Posterior vena cava (tissue), 2 donors: ENCODE measurements at regions of chr1 and their contacts with region 1.

Region 1: GRCh38 chr1:48202030-48202752 is 20.3 kb upstream of the SLC5A9 start:
- DNase-seq: peak; percentile 89

Region 2: GRCh38 chr1:48109390-48110013 is 92.7 kb before region 1 on chr1:
- intact Hi-C with region 1: loop called (anchors 10 kb)
- DNase-seq: no peak

Region 3: GRCh38 chr1:48139275-48139674 is 62.9 kb before region 1 on chr1:
- intact Hi-C with region 1: no loop called
- DNase-seq: no peak